Activated CD4-positive, alpha-beta T cell treated with anti-CD3 and anti-CD28 coated beads for 36 hours (primary cell): ENCODE measurements at regions of chr2 and their contacts with region 1.

Region 1: GRCh38 chr2:72150157-72150865 is 2.6 kb upstream of the CYP26B1 start:
- DNase-seq: peak; percentile 81
- ATAC-seq: peak; percentile 80
- H3K4me3 Mint-ChIP-seq: peak overlapping the region; percentile 34
- H3K27ac Mint-ChIP-seq: no peak overlapping the region
- H3K4me1 Mint-ChIP-seq: peaks cover 36% of the 10 kb centered on the region
- H3K27me3 Mint-ChIP-seq: peaks cover 62% of the 10 kb centered on the region

Region 2: DNA sequence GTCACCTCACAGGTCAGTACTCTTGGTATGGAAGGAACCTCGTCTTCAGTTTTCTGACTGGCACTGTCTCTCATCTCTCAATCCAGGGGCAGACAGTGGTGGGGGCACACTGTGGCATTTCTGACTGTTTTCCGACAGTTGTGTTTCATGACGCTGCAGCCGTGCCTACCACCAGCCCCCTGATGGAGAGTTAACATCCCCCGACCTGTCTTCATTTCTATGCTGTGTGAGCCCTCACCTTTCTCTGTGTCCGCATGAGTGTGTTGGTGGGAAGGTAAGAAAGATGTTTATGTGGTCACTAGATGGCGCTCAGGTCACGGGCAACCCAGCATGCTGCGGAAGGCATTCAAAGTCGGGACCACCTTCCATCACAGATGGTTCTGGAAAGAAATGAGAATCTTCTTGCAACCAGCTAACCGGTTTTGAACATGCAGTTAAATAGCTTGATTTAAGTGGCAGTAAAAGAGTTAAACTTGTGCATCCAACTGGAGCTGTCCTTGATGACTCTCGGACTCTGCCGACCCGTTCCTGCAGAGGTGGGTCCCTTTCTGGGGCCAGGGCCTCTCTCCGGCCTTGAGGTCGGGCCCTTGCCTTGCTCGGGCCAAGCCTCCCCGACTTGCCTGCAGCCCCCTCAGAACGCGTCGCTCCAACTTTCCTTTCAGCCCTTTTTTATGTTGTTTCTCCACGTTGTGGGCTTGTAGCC is 604.6 kb before region 1 on chr2:
- CTCF ChIA-PET with region 1: interaction called, 8 read pairs
- POLR2A ChIA-PET with region 1: no interaction called
- intact Hi-C with region 1: loop called (anchors 1 kb)
- DNase-seq: peak; percentile 67
- ATAC-seq: peak; percentile 85
- H3K4me3 Mint-ChIP-seq: peak overlapping the region; percentile 39
- H3K27ac Mint-ChIP-seq: no peak overlapping the region
- H3K4me1 Mint-ChIP-seq: peaks cover 7% of the 10 kb centered on the region
- H3K27me3 Mint-ChIP-seq: peaks cover 14% of the 10 kb centered on the region

Region 3: DNA sequence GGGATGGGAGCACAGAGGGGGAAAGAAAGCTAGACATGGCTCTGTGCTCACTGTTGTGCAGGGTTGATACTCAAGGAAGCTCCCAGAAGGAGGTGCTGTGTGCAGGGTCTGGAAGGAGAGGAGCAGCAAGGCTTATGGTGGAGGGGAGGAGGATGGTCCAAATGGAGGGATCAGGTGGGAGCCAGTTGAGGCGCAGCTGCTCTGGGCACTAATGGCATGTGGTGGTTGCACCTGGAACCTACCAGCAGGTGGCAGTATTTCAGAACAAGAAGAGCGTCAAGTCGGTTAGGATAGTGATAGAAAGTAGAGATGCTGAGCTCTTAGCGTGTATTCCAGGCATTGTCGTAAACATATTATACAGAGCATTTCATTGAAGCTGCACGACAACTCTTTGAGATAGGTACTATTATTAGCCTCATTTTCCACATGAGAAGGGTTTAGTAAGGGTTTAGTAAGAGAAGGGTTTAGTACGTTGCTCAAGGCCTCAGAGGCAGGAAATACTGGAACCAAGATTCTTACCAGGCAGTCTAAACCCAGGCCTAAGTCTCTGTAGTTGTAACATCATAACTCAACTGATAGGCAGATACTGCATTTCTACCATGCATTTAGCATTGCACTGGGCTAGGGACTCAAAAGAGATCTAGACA is 226.3 kb before region 1 on chr2:
- CTCF ChIA-PET with region 1: interaction called, 41 read pairs
- POLR2A ChIA-PET with region 1: no interaction called
- intact Hi-C with region 1: loop called (anchors 1 kb)
- DNase-seq: peak; percentile 77
- ATAC-seq: peak; percentile 63
- H3K4me3 Mint-ChIP-seq: no peak overlapping the region
- H3K27ac Mint-ChIP-seq: no peak overlapping the region
- H3K4me1 Mint-ChIP-seq: no peaks in the 10 kb centered on the region
- H3K27me3 Mint-ChIP-seq: no peaks in the 10 kb centered on the region

Region 4: GRCh38 chr2:72077702-72078169 is 72.6 kb before region 1 on chr2:
- CTCF ChIA-PET with region 1: no interaction called
- POLR2A ChIA-PET with region 1: no interaction called
- intact Hi-C with region 1: no loop called
- DNase-seq: no peak
- ATAC-seq: no peak
- H3K4me3 Mint-ChIP-seq: no peak overlapping the region
- H3K27ac Mint-ChIP-seq: no peak overlapping the region
- H3K4me1 Mint-ChIP-seq: no peaks in the 10 kb centered on the region
- H3K27me3 Mint-ChIP-seq: peaks cover 9% of the 10 kb centered on the region

Region 5: GRCh38 chr2:72745679-72746368 is 595.5 kb after region 1 on chr2:
- CTCF ChIA-PET with region 1: no interaction called
- POLR2A ChIA-PET with region 1: interaction called, 4 read pairs
- intact Hi-C with region 1: loop called (anchors 5 to 10 kb)
- DNase-seq: no peak
- ATAC-seq: no peak
- H3K4me3 Mint-ChIP-seq: no peak overlapping the region
- H3K27ac Mint-ChIP-seq: no peak overlapping the region
- H3K4me1 Mint-ChIP-seq: no peaks in the 10 kb centered on the region
- H3K27me3 Mint-ChIP-seq: no peaks in the 10 kb centered on the region

Region 6: GRCh38 chr2:72915907-72916742 is 765.8 kb after region 1 on chr2:
- CTCF ChIA-PET with region 1: no interaction called
- POLR2A ChIA-PET with region 1: no interaction called
- intact Hi-C with region 1: loop called (anchors 5 kb)
- DNase-seq: peak; percentile 74
- ATAC-seq: peak; percentile 60
- H3K4me3 Mint-ChIP-seq: peak overlapping the region; percentile 64
- H3K27ac Mint-ChIP-seq: no peak overlapping the region
- H3K4me1 Mint-ChIP-seq: peaks cover 30% of the 10 kb centered on the region
- H3K27me3 Mint-ChIP-seq: peaks cover 71% of the 10 kb centered on the region

Region 7: DNA sequence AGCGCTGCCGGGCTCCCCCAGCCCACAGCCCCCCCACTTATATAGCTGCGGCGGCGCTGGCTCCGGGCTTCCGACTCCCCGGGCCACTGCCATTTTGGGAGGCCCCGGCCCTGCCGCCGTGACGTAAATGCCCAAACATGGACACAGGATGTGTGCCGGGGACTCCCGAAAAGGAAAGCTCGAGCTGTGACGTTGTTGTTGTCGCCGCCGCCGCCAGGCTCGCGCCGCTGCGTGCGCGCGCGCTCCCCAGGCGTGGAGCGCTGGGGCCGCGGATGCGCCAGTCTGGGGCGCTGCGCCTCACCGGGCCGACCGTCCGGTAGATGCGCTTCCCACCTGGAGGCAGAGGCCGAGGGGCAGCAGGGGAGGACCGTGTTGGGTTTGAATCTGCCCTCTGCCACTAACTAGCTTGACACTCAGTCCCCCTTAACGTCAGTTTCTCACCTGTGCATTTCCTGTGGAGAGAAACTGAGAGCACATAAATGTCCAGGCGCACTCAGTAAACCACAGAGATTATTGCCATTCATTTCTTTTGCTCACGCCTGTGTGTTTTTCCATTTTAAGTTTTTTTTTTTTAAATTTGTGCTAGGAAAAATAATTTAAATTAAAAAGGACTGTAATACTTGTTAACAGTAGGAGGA is 1143.3 kb after region 1 on chr2 and contains the start of gene EGR4:
- CTCF ChIA-PET with region 1: no interaction called
- POLR2A ChIA-PET with region 1: no interaction called
- intact Hi-C with region 1: loop called in 1 of 2 experiments (anchors 10 kb)
- DNase-seq: peak; percentile 95
- ATAC-seq: peak; percentile 96
- H3K4me3 Mint-ChIP-seq: peak within 1 kb of the TSS; percentile 68
- H3K27ac Mint-ChIP-seq: no peak within 1 kb of the TSS
- H3K4me1 Mint-ChIP-seq: peaks cover 12% of the 10 kb centered on the region
- H3K27me3 Mint-ChIP-seq: peaks cover 65% of the 10 kb centered on the region
- total RNA-seq, gene EGR4: 0.18 to 0.41 TPM